ENCODE measurements at regions of chr19 and their contacts with region 1.

Region 1: GRCh38 chr19:41775360-41775695 is 20.0 kb downstream of the CEACAM6 start:
- DNase-seq: no peak
- ATAC-seq: no peak
- H3K4me3 Mint-ChIP-seq: no peak overlapping the region
- H3K27ac Mint-ChIP-seq: no peak overlapping the region
- H3K4me1 Mint-ChIP-seq: peaks cover 33% of the 10 kb centered on the region
- H3K27me3 Mint-ChIP-seq: peaks cover 68% of the 10 kb centered on the region

Region 2: GRCh38 chr19:41714598-41714997 is 60.7 kb before region 1 on chr19:
- CTCF ChIA-PET with region 1: no interaction called
- POLR2A ChIA-PET with region 1: no interaction called
- intact Hi-C with region 1: no loop called
- DNase-seq: no peak
- ATAC-seq: no peak
- H3K4me3 Mint-ChIP-seq: no peak overlapping the region
- H3K27ac Mint-ChIP-seq: no peak overlapping the region
- H3K4me1 Mint-ChIP-seq: no peaks in the 10 kb centered on the region
- H3K27me3 Mint-ChIP-seq: peaks cover 21% of the 10 kb centered on the region

Region 3: GRCh38 chr19:41740415-41741243 is 34.7 kb before region 1 on chr19:
- CTCF ChIA-PET with region 1: interaction called, 8 read pairs
- POLR2A ChIA-PET with region 1: no interaction called
- intact Hi-C with region 1: loop called in 1 of 2 experiments (anchors 1 kb)
- DNase-seq: peak; percentile 37
- ATAC-seq: peak; percentile 91
- H3K4me3 Mint-ChIP-seq: no peak overlapping the region
- H3K27ac Mint-ChIP-seq: no peak overlapping the region
- H3K4me1 Mint-ChIP-seq: peaks cover 21% of the 10 kb centered on the region
- H3K27me3 Mint-ChIP-seq: peaks cover 42% of the 10 kb centered on the region

Region 4: DNA sequence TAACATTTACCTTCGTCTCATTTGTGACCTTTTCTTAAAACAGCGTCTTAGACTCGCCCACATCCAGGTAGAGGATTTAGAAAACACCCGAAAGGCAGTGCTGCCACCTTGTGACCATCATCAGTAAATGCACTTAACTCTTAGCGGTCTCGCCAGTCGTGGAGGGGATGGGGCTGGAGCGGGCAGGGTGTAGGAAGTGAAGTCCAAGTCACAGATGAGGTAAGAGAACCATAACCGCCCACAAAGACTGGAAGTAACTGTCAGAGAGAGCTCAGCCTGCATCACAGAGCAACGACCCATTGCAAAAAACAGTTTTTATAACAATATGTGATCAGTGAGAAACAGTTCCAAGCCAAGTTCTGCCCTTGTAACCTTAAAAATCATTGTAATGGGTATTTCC is 10.3 kb after region 1 on chr19:
- CTCF ChIA-PET with region 1: interaction called, 7 read pairs
- POLR2A ChIA-PET with region 1: interaction called, 3 read pairs
- intact Hi-C with region 1: loop called in 1 of 2 experiments (anchors 2 kb)
- DNase-seq: peak; percentile 85
- ATAC-seq: peak; percentile 95
- H3K4me3 Mint-ChIP-seq: no peak overlapping the region
- H3K27ac Mint-ChIP-seq: no peak overlapping the region
- H3K4me1 Mint-ChIP-seq: peaks cover 17% of the 10 kb centered on the region
- H3K27me3 Mint-ChIP-seq: peaks cover 51% of the 10 kb centered on the region

Region 5: GRCh38 chr19:41945135-41945766 is 169.9 kb after region 1 on chr19:
- CTCF ChIA-PET with region 1: no interaction called
- POLR2A ChIA-PET with region 1: no interaction called
- intact Hi-C with region 1: loop called in 1 of 2 experiments (anchors 10 kb)
- DNase-seq: peak; percentile 95
- ATAC-seq: peak; percentile 92
- H3K4me3 Mint-ChIP-seq: peak overlapping the region; percentile 41
- H3K27ac Mint-ChIP-seq: peak overlapping the region; percentile 96
- H3K4me1 Mint-ChIP-seq: peaks cover 50% of the 10 kb centered on the region
- H3K27me3 Mint-ChIP-seq: peaks cover 4% of the 10 kb centered on the region

Measured in activated CD4-positive, alpha-beta T cell treated with anti-CD3 and anti-CD28 coated beads for 36 hours (primary cell).